ENCODE measurements at regions of chr1 and their contacts with region 1.

Region 1: GRCh38 chr1:6889875-6890480 is 104.7 kb downstream of the CAMTA1 start:
- DNase-seq: no peak
- H3K4me3 ChIP-seq: no peak overlapping the region
- CTCF ChIP-seq: peak; percentile 77

Region 2: DNA sequence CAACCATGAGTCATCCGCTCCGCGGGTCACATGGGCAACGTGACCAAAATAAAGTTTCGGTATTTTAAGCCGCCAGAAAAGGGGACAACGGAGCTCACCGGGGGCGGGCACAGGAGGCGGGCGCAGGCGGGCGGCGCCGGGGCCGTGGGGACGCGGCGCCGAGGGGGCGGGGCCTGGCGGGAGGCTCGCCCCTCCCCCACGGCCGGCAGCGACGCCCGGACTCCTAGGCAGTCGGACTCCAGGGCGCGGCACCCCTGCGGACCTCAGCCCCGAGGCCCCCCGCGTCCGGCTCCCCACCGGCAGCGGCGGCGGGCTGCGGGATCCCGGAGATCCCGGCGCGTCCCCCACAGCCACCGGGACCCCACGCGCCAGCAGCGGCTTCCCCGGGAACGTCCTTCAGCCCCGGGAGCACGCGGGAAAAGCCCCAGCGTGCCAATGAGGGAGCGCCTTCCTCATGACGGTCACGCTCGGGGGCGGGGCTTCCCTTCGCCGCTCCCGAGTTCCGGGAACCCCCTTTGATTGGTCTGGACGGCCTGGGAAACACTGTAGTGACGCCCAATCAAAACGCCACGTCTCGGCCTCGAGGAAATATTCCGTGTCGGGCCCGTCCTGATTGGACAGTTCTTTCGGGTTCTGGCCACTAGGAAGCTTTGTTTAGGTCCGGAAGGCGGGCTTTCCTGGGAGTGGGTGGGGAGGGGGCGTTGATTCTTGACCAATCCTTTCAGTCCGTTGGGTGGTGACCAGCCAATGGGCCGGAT is 105.2 kb before region 1 on chr1:
- CTCF ChIA-PET with region 1: interaction called, 20 read pairs
- POLR2A ChIA-PET with region 1: no interaction called
- DNase-seq: peak; percentile 100
- H3K4me3 ChIP-seq: peak overlapping the region; percentile 73
- CTCF ChIP-seq: no peak

Region 3: DNA sequence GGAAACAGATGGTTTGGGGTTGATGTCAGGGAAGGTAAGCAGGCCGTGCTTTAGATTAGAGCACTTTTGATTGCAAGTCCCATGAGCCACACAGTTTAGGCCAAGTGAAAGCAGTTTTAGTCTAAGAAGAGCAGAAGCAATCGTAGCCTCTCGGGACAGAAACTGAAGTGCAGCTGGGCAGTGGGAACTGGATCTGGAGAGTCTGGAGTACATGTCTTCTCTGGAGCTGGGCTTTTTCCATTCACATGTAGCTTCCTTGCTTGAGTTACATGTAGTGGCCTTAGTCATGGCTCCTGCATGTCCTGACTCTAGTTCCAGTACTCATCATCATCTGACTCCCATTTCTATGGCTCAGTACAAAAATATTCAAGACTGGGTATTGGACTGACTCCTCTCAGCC is 88.0 kb before region 1 on chr1:
- CTCF ChIA-PET with region 1: interaction called, 92 read pairs
- POLR2A ChIA-PET with region 1: no interaction called
- DNase-seq: no peak
- H3K4me3 ChIP-seq: no peak overlapping the region
- CTCF ChIP-seq: no peak

Region 4: GRCh38 chr1:6842301-6842700 is 47.7 kb before region 1 on chr1:
- CTCF ChIA-PET with region 1: interaction called, 14 read pairs
- POLR2A ChIA-PET with region 1: no interaction called
- DNase-seq: no peak
- H3K4me3 ChIP-seq: no peak overlapping the region
- CTCF ChIP-seq: no peak

Region 5: GRCh38 chr1:6904466-6905170 is 14.6 kb after region 1 on chr1:
- CTCF ChIA-PET with region 1: interaction called, 18 read pairs
- POLR2A ChIA-PET with region 1: no interaction called
- DNase-seq: no peak
- H3K4me3 ChIP-seq: no peak overlapping the region
- CTCF ChIP-seq: no peak

Region 6: DNA sequence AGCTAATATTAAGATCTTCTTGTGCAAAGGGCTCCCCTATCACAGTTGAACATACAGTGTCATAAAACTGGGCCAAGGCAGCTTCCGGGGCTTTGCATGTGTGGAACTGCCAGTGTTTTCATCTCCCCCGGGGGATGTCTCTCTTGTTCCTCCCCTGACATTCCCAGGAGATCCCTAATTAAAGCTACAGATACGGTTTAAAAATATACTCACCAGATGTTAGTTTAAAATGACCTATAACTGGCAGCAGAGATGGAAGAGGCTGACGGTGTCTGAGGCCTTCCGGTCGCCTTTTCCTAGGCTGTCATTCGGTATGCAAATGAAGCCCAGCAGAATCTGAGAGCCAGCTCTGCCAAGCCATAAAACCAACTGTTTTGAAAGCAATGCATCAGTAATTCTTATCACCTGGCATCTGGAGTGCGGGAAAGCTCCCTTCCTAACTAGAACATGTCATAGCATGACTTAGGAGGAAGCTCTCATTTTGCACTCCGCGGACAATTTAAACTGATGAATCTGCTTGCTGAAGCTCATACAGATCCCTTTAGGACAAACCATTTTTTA is 444.6 kb after region 1 on chr1:
- CTCF ChIA-PET with region 1: no interaction called
- POLR2A ChIA-PET with region 1: no interaction called
- DNase-seq: no peak
- H3K4me3 ChIP-seq: no peak overlapping the region
- CTCF ChIP-seq: no peak

Measured in AG04449 (cell line).